SK-N-SH (cell line): ENCODE measurements at regions of chr11 and their contacts with region 1.

Region 1: GRCh38 chr11:102940714-102941588 is 14.6 kb downstream of the MMP13 start:
- DNase-seq: peak; percentile 46
- H3K4me3 ChIP-seq: no peak overlapping the region; a peak in 1 of 4 replicates
- H3K27ac ChIP-seq: no peak overlapping the region
- H3K4me1 ChIP-seq: no peaks in the 10 kb centered on the region; a peak in 1 of 4 replicates
- H3K27me3 ChIP-seq: no peaks in the 10 kb centered on the region
- CTCF ChIP-seq: peak; percentile 84
- EP300 ChIP-seq: no peak
- RAD21 ChIP-seq: peak; percentile 77

Region 2: GRCh38 chr11:102810945-102811660 is 129.8 kb before region 1 on chr11:
- CTCF ChIA-PET with region 1: interaction called, 13 read pairs
- POLR2A ChIA-PET with region 1: no interaction called
- DNase-seq: peak; percentile 10
- H3K4me3 ChIP-seq: peak overlapping the region in 1 of 2 experiments; percentile 15; a peak in 1 of 4 replicates
- H3K27ac ChIP-seq: no peak overlapping the region
- H3K4me1 ChIP-seq: peaks cover 2 to 6% of the 10 kb centered on the region in 2 experiments; a peak in 3 of 4 replicates
- H3K27me3 ChIP-seq: no peaks in the 10 kb centered on the region
- CTCF ChIP-seq: peak; percentile 65
- EP300 ChIP-seq: no peak
- RAD21 ChIP-seq: no peak; the same call in 1 of the 2 replicates

Region 3: GRCh38 chr11:102914238-102915043 is 26.5 kb before region 1 on chr11:
- CTCF ChIA-PET with region 1: interaction called, 15 read pairs
- POLR2A ChIA-PET with region 1: no interaction called
- DNase-seq: peak; percentile 11
- H3K4me3 ChIP-seq: no peak overlapping the region
- H3K27ac ChIP-seq: no peak overlapping the region
- H3K4me1 ChIP-seq: peaks cover 0 to 7% of the 10 kb centered on the region in 2 experiments; a peak in 1 of 4 replicates
- H3K27me3 ChIP-seq: no peaks in the 10 kb centered on the region
- CTCF ChIP-seq: peak; percentile 78
- EP300 ChIP-seq: no peak
- RAD21 ChIP-seq: peak; percentile 54